ENCODE measurements at regions of chr6 and their contacts with region 1.

Region 1: GRCh38 chr6:137210903-137211302 is 8.3 kb downstream of the IFNGR1 start:
- DNase-seq: no peak
- ATAC-seq: peak in 7 of 8 donors; percentile 37 to 87 (median 69)
- H3K4me3 ChIP-seq: no peak overlapping the region
- H3K27ac ChIP-seq: peak overlapping the region in 9 of 10 donors; percentile 12 to 99 (median 64)
- H3K4me1 ChIP-seq: peaks cover 20 to 100% (median 85%) of the 10 kb centered on the region in 9 donors
- H3K27me3 ChIP-seq: no peaks in the 10 kb centered on the region
- CTCF ChIP-seq: no peak

Region 2: DNA sequence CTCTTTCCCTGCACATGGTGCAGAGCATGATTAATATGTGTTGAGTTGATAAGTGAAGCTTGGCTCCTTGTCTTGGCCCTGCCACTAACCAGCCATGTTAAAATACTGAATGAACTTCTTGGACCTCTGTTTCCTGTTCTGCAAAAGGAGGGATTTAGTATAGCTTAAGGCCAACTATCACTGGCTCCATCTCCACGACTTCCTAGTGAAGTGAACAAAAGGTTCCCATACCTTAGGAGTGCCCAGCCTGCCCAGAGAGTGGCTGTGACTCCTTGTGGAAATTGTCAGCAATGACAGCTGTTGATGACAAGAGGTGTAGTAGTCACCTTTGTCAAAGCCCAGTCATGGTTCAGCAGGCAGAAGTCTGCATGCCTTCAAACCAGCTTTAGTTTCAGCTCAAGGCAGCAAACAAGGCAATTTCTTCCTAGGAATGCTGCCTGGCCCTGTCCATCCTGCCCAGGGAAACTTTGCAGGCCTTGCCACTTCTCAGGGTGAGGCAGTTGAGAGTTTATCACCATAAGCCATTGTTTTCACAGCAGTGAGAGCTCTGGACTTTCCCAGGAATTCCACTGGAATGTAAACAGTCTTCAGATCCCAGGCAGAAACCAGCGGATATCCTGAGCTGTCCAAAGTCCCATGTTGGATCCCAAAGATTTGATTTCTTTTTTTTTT is 486.5 kb after region 1 on chr6:
- intact Hi-C with region 1: loop called in 1 of 10 experiments (anchors 5 kb)
- DNase-seq: no peak
- ATAC-seq: peak; percentile 30 to 81 (median 60)
- H3K4me3 ChIP-seq: no peak overlapping the region
- H3K27ac ChIP-seq: peak overlapping the region in 9 of 10 donors; percentile 26 to 79 (median 63)
- H3K4me1 ChIP-seq: peaks cover 0 to 69% (median 36%) of the 10 kb centered on the region in 9 donors
- H3K27me3 ChIP-seq: no peaks in the 10 kb centered on the region
- CTCF ChIP-seq: peak in 1 of 9 donors; percentile 17